HCT116 (cell line): ENCODE measurements at regions of chr15 and their contacts with region 1.

Region 1: GRCh38 chr15:45705510-45706473 is 71.0 kb downstream of the SQOR start:
- DNase-seq: peak; percentile 71
- ATAC-seq: peak; percentile 93
- H3K4me3 ChIP-seq: peak overlapping the region; percentile 21 to 40
- H3K27ac ChIP-seq: no peak overlapping the region
- H3K4me1 ChIP-seq: peaks cover 0 to 11% of the 10 kb centered on the region in 2 experiments; a peak in 2 of 4 replicates
- H3K27me3 ChIP-seq: no peaks in the 10 kb centered on the region
- CTCF ChIP-seq: peak; percentile 27 to 85 (median 80); a peak in 4 of 6 replicates
- POLR2A ChIP-seq: no peak
- RAD21 ChIP-seq: peak; percentile 65

Region 2: GRCh38 chr15:45670091-45670490 is 35.7 kb before region 1 on chr15:
- CTCF ChIA-PET with region 1: no interaction called
- POLR2A ChIA-PET with region 1: no interaction called
- RAD21 ChIA-PET with region 1: no interaction called
- intact Hi-C with region 1: no loop called
- DNase-seq: no peak
- ATAC-seq: no peak
- H3K4me3 ChIP-seq: no peak overlapping the region
- H3K27ac ChIP-seq: no peak overlapping the region
- H3K4me1 ChIP-seq: no peaks in the 10 kb centered on the region
- H3K27me3 ChIP-seq: no peaks in the 10 kb centered on the region
- CTCF ChIP-seq: no peak
- POLR2A ChIP-seq: no peak
- RAD21 ChIP-seq: no peak

Region 3: GRCh38 chr15:45790325-45790943 is 84.6 kb after region 1 on chr15:
- CTCF ChIA-PET with region 1: interaction called, 17 read pairs
- POLR2A ChIA-PET with region 1: no interaction called
- RAD21 ChIA-PET with region 1: no interaction called
- intact Hi-C with region 1: loop called (anchors 2 kb)
- DNase-seq: peak; percentile 6
- ATAC-seq: peak; percentile 84
- H3K4me3 ChIP-seq: no peak overlapping the region
- H3K27ac ChIP-seq: no peak overlapping the region
- H3K4me1 ChIP-seq: no peaks in the 10 kb centered on the region
- H3K27me3 ChIP-seq: no peaks in the 10 kb centered on the region
- CTCF ChIP-seq: peak; percentile 30 to 72 (median 62); a peak in 5 of 6 replicates
- POLR2A ChIP-seq: no peak
- RAD21 ChIP-seq: peak; percentile 31; the same call in 1 of the 2 replicates

Region 4: DNA sequence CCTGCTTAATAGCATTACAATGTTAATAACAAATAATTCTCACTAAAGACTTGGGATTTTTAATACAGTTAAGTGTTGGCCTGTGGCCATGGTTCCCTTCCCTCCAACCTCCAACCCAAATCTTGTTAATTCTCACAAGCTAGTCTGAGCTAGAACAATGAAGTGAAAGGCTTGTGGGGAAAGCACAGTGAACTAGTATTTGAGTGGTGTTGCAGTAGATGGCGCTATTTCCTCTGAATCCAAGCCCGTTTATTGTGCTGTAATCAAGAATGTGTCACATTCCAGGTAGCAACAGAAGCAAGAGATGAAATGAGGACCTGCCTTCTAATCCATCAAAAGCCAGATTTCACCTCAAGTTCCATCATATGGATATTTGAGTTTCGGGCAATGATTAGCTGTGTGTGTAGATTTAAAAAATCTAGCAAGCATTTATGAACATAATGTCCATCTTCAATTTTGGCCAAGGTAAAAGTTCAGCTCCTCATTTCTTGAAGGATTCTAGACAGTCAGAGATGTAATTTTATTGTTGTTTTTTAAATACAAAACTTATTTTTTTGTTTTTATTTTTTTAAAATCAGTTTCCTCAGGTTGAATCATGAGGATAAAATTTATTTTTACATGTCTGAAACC is 89.8 kb after region 1 on chr15:
- CTCF ChIA-PET with region 1: interaction called, 17 read pairs
- POLR2A ChIA-PET with region 1: no interaction called
- RAD21 ChIA-PET with region 1: no interaction called
- intact Hi-C with region 1: loop called (anchors 2 kb)
- DNase-seq: peak; percentile 47
- ATAC-seq: peak; percentile 66; the same call in 1 of the 2 replicates
- H3K4me3 ChIP-seq: no peak overlapping the region
- H3K27ac ChIP-seq: no peak overlapping the region
- H3K4me1 ChIP-seq: no peaks in the 10 kb centered on the region
- H3K27me3 ChIP-seq: no peaks in the 10 kb centered on the region
- CTCF ChIP-seq: peak; percentile 22 to 74 (median 65); a peak in 5 of 6 replicates
- POLR2A ChIP-seq: no peak
- RAD21 ChIP-seq: peak; percentile 61

Region 5: GRCh38 chr15:46312133-46312740 is 606.4 kb after region 1 on chr15:
- CTCF ChIA-PET with region 1: no interaction called
- POLR2A ChIA-PET with region 1: no interaction called
- RAD21 ChIA-PET with region 1: no interaction called
- intact Hi-C with region 1: loop called (anchors 5 kb)
- DNase-seq: peak; percentile 8
- ATAC-seq: peak; percentile 53; the same call in 1 of the 2 replicates
- H3K4me3 ChIP-seq: no peak overlapping the region
- H3K27ac ChIP-seq: no peak overlapping the region
- H3K4me1 ChIP-seq: no peaks in the 10 kb centered on the region
- H3K27me3 ChIP-seq: no peaks in the 10 kb centered on the region
- CTCF ChIP-seq: peak in 2 of 3 experiments; percentile 67 to 72; a peak in 4 of 6 replicates
- POLR2A ChIP-seq: no peak
- RAD21 ChIP-seq: peak; percentile 27; the same call in 1 of the 2 replicates